Adrenal gland (tissue), 19 donors: ENCODE measurements at regions of chr19 and their contacts with region 1.

Region 1: DNA sequence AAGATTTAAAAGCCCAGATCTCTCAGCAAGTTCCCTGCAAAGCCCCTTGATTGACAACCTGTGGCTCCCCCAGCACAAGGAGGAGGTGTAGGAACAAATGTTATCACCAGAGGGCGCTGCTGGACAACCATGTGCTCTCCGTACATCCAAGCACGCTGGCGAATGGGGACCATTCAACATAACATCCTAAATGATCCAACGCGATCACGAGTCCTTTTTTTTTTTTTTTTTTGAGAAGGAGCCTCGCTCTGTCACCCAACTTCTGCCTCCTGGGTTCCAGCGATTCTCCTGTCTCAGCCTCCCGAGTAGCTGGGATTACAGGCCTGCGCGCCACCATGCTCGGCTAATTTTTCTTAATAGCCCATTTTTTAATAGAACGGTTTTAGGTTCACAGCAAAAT is 52.0 kb downstream of the NWD1 start:
- DNase-seq: peak; percentile 72 to 88 (median 78)
- H3K4me3 ChIP-seq: no peak overlapping the region
- H3K27ac ChIP-seq: no peak overlapping the region
- H3K4me1 ChIP-seq: no peaks in the 10 kb centered on the region
- H3K27me3 ChIP-seq: no peaks in the 10 kb centered on the region
- CTCF ChIP-seq: peak; percentile 79 to 90 (median 84)
- POLR2A ChIP-seq: no peak

Region 2: GRCh38 chr19:16726916-16727315 is 44.7 kb before region 1 on chr19:
- intact Hi-C with region 1: no loop called
- DNase-seq: no peak
- H3K4me3 ChIP-seq: no peak overlapping the region
- H3K27ac ChIP-seq: no peak overlapping the region
- H3K4me1 ChIP-seq: no peaks in the 10 kb centered on the region
- H3K27me3 ChIP-seq: no peaks in the 10 kb centered on the region
- CTCF ChIP-seq: no peak
- POLR2A ChIP-seq: no peak

Region 3: GRCh38 chr19:16899566-16900075 is 128.0 kb after region 1 on chr19:
- intact Hi-C with region 1: loop called (anchors 5 to 10 kb)
- DNase-seq: peak in 2 of 7 donors; percentile 43 to 63
- H3K4me3 ChIP-seq: no peak overlapping the region
- H3K27ac ChIP-seq: no peak overlapping the region
- H3K4me1 ChIP-seq: peaks cover 10 to 12% of the 10 kb centered on the region in 2 donors
- H3K27me3 ChIP-seq: no peaks in the 10 kb centered on the region
- CTCF ChIP-seq: peak in 5 of 6 experiments; percentile 25 to 54 (median 53)
- POLR2A ChIP-seq: no peak

Region 4: GRCh38 chr19:17052439-17053210 is 281.0 kb after region 1 on chr19:
- intact Hi-C with region 1: loop called (anchors 2 to 5 kb)
- DNase-seq: peak; percentile 45 to 82 (median 53)
- H3K4me3 ChIP-seq: no peak overlapping the region
- H3K27ac ChIP-seq: no peak overlapping the region
- H3K4me1 ChIP-seq: no peaks in the 10 kb centered on the region
- H3K27me3 ChIP-seq: no peaks in the 10 kb centered on the region
- CTCF ChIP-seq: peak; percentile 50 to 71 (median 66)
- POLR2A ChIP-seq: no peak

Region 5: DNA sequence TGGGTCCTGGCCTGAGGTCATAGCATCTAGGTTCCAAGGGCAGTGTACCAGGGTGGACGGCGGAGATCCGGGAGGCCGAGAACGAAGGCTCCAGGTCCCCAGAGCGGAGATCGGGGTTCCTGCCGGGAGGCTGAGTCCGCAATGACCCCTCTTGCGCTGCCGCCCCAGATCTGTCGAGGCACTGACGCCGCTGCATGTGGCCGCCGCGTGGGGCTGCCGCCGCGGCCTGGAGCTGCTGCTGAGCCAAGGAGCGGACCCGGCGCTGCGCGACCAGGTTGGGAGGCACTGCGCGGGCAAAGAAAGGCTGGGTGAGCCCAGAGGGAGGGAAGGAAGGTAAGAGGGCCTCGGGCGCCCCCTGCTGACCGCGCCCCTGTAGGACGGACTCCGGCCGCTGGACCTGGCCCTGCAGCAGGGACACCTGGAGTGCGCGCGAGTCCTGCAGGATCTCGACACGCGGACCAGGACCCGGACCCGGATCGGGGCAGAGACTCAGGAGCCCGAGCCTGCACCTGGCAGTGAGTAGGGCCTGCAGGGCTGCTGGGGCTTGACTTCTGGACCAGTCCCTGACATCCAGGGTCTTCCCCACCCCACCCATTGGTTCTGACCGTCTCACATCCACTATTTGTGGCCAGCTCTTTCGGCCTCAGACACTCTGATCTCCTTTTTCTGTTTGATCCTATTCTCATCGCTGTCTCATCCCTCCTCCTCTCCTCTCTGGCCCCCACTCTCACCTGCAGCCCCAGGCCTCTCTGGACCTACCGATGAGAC is 511.1 kb after region 1 on chr19:
- intact Hi-C with region 1: loop called in 1 of 2 experiments (anchors 10 kb)
- DNase-seq: peak; percentile 79 to 94 (median 86)
- H3K4me3 ChIP-seq: peak overlapping the region in 1 of 4 donors; percentile 41
- H3K27ac ChIP-seq: no peak overlapping the region
- H3K4me1 ChIP-seq: peaks cover 10 to 17% of the 10 kb centered on the region in 2 donors
- H3K27me3 ChIP-seq: peaks cover 6% of the 10 kb centered on the region
- CTCF ChIP-seq: peak; percentile 73 to 96 (median 90)
- POLR2A ChIP-seq: no peak